GM10248 (cell line): ENCODE measurements at regions of chr9 and their contacts with region 1.

Region 1: GRCh38 chr9:89743573-89744361 is 139.0 kb downstream of the GADD45G start:
- DNase-seq: peak; percentile 65
- CTCF ChIP-seq: no peak

Region 2: GRCh38 chr9:89755821-89756220 is 12.1 kb after region 1 on chr9:
- CTCF ChIA-PET with region 1: interaction called, 30 read pairs
- POLR2A ChIA-PET with region 1: no interaction called
- DNase-seq: no peak
- CTCF ChIP-seq: no peak

Region 3: GRCh38 chr9:89770531-89771174 is 26.9 kb after region 1 on chr9:
- CTCF ChIA-PET with region 1: no interaction called
- POLR2A ChIA-PET with region 1: no interaction called
- DNase-seq: no peak
- CTCF ChIP-seq: no peak

Region 4: DNA sequence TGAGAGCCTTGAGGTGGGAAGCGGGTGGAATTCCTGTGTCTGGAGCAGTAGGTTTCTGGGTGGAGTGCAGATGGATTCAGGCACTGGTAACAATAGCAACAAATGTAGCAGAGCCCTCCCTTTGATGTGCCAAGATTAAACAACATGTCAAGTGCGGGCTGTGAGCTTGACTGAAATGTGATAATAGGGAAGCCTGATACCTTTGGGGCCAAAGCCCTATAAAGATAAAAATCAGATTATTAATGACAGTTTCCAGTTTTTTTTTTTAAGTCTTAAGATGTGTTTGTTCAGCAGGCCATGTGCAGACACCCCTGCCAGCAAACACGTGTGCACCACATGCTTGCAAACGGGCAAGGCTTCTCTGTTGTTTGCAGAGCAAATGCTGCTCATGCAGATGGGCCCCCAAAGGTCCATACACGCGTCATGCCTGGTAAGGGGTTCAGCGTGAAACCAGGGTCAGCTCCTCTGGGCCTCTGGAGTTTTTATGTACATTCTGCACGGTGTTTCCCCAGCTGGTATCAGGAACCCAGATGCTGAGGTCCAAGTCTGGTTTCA is 54.2 kb after region 1 on chr9:
- CTCF ChIA-PET with region 1: no interaction called
- POLR2A ChIA-PET with region 1: no interaction called
- DNase-seq: no peak
- CTCF ChIP-seq: no peak